Activated T-helper 2 cell treated with anti-CD3 and anti-CD28 coated beads, Interferon-gamma antibody, Interleukin-2, Interleukin-4, amounts not matched to agents 10 μg/mL and 5 μg/mL and 100 μg/mL, durations not matched to agents 14 hours and 24 hours and 36 hours (primary cell): ENCODE measurements at regions of chr2 and their contacts with region 1.

Region 1: DNA sequence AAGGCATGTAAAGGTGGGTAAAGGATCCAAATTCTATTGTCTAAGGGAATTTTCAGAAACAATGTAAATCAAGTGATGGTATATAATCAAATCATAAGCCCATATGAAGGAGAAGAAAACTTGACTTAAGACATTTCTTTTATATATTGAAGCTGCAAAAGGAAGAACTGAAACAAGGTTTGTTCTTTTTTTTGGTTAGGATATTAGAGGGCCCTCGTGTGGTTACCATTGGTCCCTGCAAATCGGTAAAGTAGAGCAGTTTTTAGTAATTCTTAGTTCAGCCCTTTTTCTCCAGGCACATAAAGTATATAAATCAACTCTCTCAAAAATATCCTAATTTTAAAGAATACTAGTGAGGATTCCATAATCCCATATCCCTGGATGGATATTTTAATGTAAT is 105.6 kb upstream of the STK17B start:
- DNase-seq: no peak
- H3K4me3 Mint-ChIP-seq: no peak overlapping the region
- H3K27ac Mint-ChIP-seq: no peak overlapping the region
- H3K4me1 Mint-ChIP-seq: peaks cover 45% of the 10 kb centered on the region
- H3K27me3 Mint-ChIP-seq: no peaks in the 10 kb centered on the region

Region 2: GRCh38 chr2:196131384-196131937 is 145.5 kb before region 1 on chr2:
- intact Hi-C with region 1: loop called (anchors 1 kb)
- DNase-seq: peak; percentile 40
- H3K4me3 Mint-ChIP-seq: no peak overlapping the region
- H3K27ac Mint-ChIP-seq: peak overlapping the region; percentile 51
- H3K4me1 Mint-ChIP-seq: peaks cover 2% of the 10 kb centered on the region
- H3K27me3 Mint-ChIP-seq: no peaks in the 10 kb centered on the region

Region 3: DNA sequence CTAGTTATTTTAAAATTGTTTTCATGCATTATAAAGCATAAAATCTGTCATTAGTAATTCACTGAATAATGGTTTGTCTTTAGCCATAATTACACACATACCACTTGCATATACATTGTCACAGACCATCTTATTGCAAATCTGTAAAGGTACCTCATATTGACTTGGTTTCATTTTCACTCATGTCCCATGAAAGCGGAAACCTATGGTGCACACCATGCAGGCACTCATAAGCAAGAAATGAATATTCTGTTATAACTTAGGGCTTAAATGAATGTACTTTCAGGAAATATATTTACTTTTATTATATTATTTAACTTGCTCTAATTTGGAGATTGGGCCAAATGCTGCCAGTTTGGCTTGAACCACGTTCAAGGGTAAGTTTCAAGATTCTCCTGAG is 76.4 kb before region 1 on chr2:
- intact Hi-C with region 1: loop called (anchors 2 kb)
- DNase-seq: peak; percentile 34
- H3K4me3 Mint-ChIP-seq: peak overlapping the region; percentile 26
- H3K27ac Mint-ChIP-seq: peak overlapping the region; percentile 75
- H3K4me1 Mint-ChIP-seq: peaks cover 44% of the 10 kb centered on the region
- H3K27me3 Mint-ChIP-seq: no peaks in the 10 kb centered on the region

Region 4: GRCh38 chr2:196233805-196234475 is 43.1 kb before region 1 on chr2:
- intact Hi-C with region 1: loop called (anchors 2 kb)
- DNase-seq: no peak
- H3K4me3 Mint-ChIP-seq: no peak overlapping the region
- H3K27ac Mint-ChIP-seq: peak overlapping the region; percentile 62
- H3K4me1 Mint-ChIP-seq: peaks cover 79% of the 10 kb centered on the region
- H3K27me3 Mint-ChIP-seq: no peaks in the 10 kb centered on the region